ENCODE measurements at regions of chr2 and their contacts with region 1.

Region 1: GRCh38 chr2:241734467-241735208 is at the start of gene D2HGDH:
- DNase-seq: peak; percentile 98
- CTCF ChIP-seq: no peak

Region 2: DNA sequence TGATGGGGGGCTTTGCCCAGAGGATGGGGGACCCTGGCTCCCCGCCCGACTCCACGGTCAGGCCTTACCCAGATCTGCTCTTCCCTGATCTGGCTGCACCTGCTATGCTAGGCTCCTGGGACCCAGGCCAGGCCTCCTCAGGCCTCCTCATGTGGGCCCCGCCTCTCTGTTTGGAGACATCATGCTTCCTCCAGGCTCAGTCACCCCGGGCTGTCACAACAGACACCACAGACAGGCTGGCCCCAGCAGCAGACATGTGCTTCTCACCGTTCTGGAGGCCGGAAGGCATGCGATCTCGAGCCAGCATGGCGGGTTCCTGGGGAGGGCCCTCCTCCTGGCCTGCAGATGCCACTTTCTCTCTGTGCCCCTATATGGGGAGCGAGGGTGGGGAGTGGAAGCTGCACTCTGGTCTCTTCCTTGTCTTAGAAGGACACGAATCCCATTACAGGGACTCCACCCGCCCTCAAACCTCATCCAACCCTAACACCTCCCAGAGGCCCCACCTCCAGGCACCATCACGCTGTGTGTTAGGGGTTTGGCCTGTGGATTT is 63.5 kb after region 1 on chr2:
- in situ Hi-C with region 1: no loop called
- DNase-seq: peak; percentile 36
- CTCF ChIP-seq: no peak

Region 3: DNA sequence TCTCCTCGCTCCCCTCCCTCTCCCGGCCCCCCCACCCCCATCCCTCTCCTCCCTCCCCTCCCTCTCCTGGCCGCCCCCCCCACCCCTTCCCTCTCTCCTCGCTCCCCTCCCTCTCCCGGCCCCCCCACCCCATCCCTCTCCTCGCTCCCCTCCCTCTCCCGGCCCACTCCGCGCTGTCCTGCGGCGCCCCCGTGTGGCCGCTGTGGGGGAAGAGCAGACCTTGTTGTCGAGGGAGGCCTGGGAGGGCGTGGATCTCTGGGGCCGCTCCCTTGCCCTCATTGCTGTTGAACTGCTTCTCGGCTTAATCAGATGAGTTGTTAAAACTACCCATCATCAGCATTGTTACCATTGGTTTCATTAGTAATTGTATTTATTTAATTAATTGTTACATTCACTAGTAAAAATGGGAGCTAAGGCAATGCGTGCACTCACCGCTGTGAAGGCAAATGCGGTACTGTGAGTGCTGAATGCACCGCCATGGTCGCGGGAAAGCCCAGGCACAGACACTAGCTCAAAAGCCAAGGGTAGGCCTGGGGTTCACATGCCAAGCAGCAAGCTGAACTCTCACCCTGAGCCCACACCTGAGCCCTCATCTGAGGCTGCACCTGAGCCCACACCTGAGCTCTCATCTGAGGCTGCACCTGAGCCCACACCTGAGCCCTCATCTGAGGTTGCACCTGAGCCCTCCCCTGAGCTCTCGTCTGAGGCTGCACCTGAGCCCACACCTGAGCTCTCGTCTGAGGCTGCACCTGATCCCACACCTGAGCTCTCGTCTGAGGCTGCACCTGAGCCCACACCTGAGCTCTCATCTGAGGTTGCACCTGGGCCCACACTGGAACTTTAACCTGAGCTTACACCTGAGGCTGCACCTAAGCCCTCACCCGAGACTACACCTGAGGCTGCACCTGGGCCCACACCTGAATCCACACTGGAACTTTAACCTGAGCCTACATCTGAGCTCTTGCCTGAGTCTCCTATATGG is 143.6 kb after region 1 on chr2:
- in situ Hi-C with region 1: loop called (anchors 10 kb)
- DNase-seq: peak; percentile 81
- CTCF ChIP-seq: peak; percentile 95

Measured in GM13976 (cell line).